Aorta (tissue), 5 donors: ENCODE measurements at regions of chr4 and their contacts with region 1.

Region 1: GRCh38 chr4:150583287-150584110 is 1.5 kb downstream of the MAB21L2 start:
- DNase-seq: peak; percentile 53 to 76
- ATAC-seq: peak; percentile 54
- H3K4me3 ChIP-seq: peak overlapping the region in 1 of 2 donors; percentile 5
- H3K27ac ChIP-seq: no peak overlapping the region
- H3K4me1 ChIP-seq: no peaks in the 10 kb centered on the region
- H3K27me3 ChIP-seq: no peaks in the 10 kb centered on the region

Region 2: DNA sequence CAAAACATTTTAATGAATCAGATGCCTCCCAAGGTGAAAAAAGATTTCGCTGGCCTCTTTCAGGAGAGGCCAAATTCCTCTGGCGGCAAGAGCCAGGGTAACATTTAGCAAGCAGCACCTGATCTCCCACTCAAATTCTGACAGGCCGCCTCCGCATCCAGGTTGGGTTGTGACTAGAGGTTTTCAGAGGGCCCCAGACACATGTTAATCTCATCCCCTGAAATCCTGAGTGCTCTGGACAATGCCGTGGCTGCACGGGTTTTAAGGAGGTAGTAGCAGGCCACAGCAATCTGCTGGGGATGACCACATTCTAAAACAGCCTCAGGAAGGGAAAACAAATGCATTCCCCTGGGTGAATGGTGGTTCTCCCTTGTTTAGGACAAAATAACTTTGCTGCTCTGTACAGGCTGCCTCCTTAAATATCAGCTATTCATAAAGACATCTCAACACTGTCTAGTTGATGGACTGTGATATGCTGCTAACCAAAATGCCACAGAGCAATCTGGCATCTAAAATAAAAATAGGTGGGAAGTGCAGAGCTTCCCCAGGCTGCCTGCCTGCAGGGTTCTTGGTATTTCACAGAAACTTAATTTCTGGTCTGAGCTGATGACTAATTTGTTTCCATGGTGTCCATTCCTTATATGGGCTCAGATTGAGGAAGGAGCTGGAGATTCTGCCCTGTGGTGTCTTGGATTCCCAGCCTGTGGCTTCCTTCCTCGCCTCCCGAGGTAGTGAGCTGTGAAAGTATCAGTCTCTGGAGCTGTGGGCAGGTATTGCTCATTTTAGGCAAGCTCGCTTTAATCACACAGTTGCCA is 303.2 kb before region 1 on chr4:
- intact Hi-C with region 1: loop called in 1 of 2 experiments (anchors 10 kb)
- DNase-seq: no peak
- ATAC-seq: no peak
- H3K4me3 ChIP-seq: no peak overlapping the region
- H3K27ac ChIP-seq: no peak overlapping the region
- H3K4me1 ChIP-seq: no peaks in the 10 kb centered on the region
- H3K27me3 ChIP-seq: no peaks in the 10 kb centered on the region

Region 3: DNA sequence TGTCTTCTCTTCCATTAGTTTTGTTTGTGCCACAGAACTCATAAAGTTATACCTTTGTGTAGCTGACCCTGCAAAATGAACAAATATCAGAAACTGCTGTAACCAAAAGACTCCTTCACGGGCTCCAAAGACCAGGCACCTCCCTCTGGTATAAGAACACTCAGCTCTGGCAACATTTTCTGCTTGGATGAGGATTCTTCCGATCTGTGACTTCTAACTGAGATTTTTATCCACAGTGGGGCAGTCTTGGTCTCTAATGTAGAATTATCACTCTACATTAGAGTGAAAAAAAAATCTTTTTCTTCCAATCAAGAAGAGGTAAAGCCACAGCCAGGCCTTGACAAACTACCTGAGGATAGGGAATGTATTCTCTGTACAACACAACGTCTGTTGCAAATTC is 655.0 kb after region 1 on chr4:
- intact Hi-C with region 1: no loop called
- DNase-seq: no peak
- ATAC-seq: peak; percentile 70
- H3K4me3 ChIP-seq: no peak overlapping the region
- H3K27ac ChIP-seq: no peak overlapping the region
- H3K4me1 ChIP-seq: no peaks in the 10 kb centered on the region
- H3K27me3 ChIP-seq: no peaks in the 10 kb centered on the region